Endothelial cell of umbilical vein (primary cell): ENCODE measurements at regions of chr7 and their contacts with region 1.

Region 1: GRCh38 chr7:99975782-99976521 is at the start of gene AZGP1:
- DNase-seq: no peak
- H3K4me3 ChIP-seq: no peak within 1 kb of the TSS
- H3K27ac ChIP-seq: no peak within 1 kb of the TSS
- H3K4me1 ChIP-seq: no peaks in the 10 kb centered on the region
- H3K27me3 ChIP-seq: peaks cover 0 to 5% of the 10 kb centered on the region in 2 experiments
- CTCF ChIP-seq: no peak
- POLR2A ChIP-seq: no peak
- total RNA-seq, gene AZGP1: not detected in 2 replicates

Region 2: DNA sequence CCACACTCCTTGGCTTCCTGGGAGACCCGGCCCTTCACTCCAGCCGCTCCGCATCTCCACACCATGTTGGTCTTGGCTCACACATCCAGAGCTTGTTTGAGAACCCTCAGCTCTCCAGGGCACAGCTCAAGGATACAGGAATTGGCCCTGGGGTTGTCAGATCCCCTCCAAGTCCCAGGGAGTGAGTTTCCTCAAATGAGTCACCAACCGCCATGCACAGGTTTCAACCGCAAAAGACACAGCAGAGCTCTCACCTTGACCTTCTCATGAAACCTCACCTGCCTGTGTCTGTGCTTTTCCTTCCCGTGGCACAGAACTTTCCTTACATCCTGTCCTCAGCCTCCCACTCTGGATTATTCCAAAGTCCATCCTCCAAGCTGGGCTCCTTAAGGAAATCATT is 20.7 kb before region 1 on chr7:
- CTCF ChIA-PET with region 1: interaction called, 11 read pairs
- POLR2A ChIA-PET with region 1: no interaction called
- dilution Hi-C with region 1: no loop called
- intact Hi-C with region 1: no loop called
- DNase-seq: no peak
- H3K4me3 ChIP-seq: no peak overlapping the region
- H3K27ac ChIP-seq: no peak overlapping the region
- H3K4me1 ChIP-seq: no peaks in the 10 kb centered on the region
- H3K27me3 ChIP-seq: peaks cover 0 to 6% of the 10 kb centered on the region in 2 experiments
- CTCF ChIP-seq: no peak
- POLR2A ChIP-seq: no peak

Region 3: GRCh38 chr7:100469227-100470044 is 493.5 kb after region 1 on chr7:
- CTCF ChIA-PET with region 1: no interaction called
- POLR2A ChIA-PET with region 1: no interaction called
- dilution Hi-C with region 1: no loop called
- intact Hi-C with region 1: no loop called
- DNase-seq: peak; percentile 66
- H3K4me3 ChIP-seq: no peak overlapping the region
- H3K27ac ChIP-seq: no peak overlapping the region
- H3K4me1 ChIP-seq: peaks cover 8% of the 10 kb centered on the region
- H3K27me3 ChIP-seq: no peaks in the 10 kb centered on the region
- CTCF ChIP-seq: peak; percentile 89 to 100
- POLR2A ChIP-seq: peak; percentile 52